ENCODE measurements at regions of chr3 and their contacts with region 1.

Region 1: DNA sequence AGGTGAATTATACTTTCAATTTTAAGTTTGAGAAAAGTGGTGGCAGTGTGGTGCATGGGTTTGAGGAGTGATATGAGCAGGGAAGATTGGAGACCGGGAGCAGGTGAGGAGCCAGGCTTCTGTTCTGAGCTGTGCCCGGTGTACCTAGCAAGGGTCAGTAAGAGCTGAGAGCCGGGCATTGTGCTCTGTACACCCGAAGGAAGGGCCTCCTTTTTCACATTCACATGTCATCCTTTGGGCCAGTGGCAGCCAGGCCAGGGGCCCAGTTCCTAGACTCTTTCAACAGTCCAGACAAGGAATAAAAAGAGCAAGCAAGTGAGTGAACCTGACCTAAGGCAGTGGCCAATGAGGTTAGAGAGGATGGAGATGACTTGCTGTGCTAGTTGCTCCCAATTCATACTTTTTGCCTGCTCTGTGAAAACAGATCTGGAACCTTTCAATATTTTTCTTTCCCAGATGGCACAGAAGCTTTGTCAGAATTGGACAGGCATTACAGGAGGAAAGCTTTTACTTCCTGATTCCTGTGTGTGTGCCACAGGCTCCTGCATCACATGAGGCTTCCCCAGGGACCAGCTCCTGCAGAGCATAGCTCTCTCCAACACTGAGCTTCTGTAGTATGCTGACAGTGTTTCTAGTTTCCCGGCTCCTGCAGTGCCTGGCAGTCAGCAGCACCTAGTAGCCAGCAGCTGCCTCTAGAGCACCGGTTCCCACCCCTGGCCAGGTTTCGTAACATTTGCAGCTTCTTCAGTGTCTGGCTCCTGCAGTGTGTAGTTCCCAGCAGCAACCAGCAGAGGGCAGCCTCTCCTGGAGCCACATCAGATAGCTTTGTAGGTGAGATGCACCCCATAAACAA is 5.3 kb upstream of the TRA2B start:
- DNase-seq: peak; percentile 61 to 87 (median 75)
- ATAC-seq: peak; percentile 28 to 92 (median 84)
- H3K4me3 ChIP-seq: peak overlapping the region in 7 of 12 donors; percentile 17 to 31 (median 26)
- H3K27ac ChIP-seq: no peak overlapping the region
- H3K4me1 ChIP-seq: peaks cover 0 to 11% (median 4%) of the 10 kb centered on the region in 12 donors
- H3K27me3 ChIP-seq: no peaks in the 10 kb centered on the region
- CTCF ChIP-seq: peak; percentile 96 to 100 (median 98)
- POLR2A ChIP-seq: no peak

Region 2: DNA sequence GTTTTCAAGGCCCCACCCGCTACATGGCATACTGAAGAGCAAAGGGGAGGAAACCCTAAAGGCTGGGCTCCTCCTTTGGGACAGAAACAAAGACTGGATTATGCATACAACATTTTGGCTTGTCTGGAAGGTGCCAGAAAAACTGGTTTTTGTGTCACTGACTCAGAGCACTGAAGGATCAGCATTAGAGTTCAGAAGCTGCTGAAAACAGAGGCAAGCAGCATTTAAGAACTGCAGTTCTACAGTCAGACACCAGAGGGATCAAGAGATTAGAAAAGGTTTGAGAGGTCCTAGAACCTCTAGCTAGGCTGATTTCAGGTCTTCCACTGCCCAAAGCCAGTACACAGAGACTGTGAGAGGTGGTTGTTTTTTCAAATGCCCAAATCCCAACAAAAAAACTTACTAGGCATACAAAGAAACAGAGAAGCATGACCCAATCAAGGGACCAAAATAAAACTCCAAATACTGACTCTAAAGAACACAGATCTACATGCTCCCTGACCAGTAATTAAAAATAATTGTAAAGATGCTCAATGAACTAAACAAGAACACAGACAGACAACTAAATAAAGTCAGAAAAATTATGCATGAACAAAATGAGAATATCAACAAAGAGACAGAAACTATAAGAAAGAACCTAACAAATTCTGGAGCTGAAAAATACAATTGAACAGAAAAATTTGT is 265.8 kb before region 1 on chr3:
- intact Hi-C with region 1: loop called in 1 of 10 experiments (anchors 10 kb)
- DNase-seq: no peak
- ATAC-seq: peak in 2 of 4 donors; percentile 46 to 53
- H3K4me3 ChIP-seq: no peak overlapping the region
- H3K27ac ChIP-seq: no peak overlapping the region
- H3K4me1 ChIP-seq: no peaks in the 10 kb centered on the region
- H3K27me3 ChIP-seq: no peaks in the 10 kb centered on the region
- CTCF ChIP-seq: peak; percentile 39 to 56 (median 47)
- POLR2A ChIP-seq: no peak

Region 3: DNA sequence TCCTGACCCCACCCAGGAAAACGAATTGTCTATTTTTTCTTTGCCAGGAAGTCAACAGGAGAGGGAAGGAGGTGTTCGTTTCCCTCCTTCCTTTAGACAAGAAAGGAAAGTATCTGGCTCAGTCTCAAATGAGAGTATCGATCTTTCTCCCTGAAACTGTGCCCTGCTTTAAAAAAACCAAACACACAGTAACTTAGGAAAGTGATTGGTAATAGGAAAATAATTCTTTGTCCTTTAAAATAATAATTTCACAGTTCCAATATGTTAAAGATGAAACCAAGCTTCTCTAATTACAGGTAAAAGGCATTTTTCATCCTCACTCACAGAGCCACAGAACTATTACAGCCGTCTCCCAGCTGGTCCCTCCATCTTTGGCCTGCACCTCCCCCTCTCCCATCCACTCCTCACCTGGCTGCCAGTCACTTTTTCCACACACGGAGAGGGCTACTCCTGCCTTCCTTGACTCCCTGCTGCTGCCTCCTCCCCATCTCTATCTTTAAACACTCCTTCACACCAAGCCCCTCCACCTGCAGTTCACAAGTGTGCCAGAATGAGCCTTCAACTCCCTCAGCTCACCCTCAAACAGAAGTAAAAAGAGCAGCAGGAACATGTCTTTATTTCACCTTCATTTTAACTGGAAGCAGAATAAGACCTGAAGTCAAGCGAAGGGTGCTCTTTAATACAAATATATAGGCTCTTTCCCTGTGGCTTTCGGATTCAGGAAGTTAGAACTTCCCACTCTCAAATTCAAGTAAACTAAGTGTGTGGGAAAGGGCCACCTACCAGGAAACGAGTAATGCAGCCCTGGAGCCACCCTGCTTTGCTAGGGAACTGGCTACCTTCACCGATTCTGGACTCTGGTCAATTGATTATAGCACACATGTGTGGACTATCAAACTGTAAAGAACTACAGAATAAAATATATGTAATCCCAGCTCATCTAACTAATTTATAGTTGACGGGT is 240.6 kb before region 1 on chr3:
- intact Hi-C with region 1: no loop called
- DNase-seq: no peak
- ATAC-seq: no peak
- H3K4me3 ChIP-seq: no peak overlapping the region
- H3K27ac ChIP-seq: no peak overlapping the region
- H3K4me1 ChIP-seq: peaks cover 0 to 20% (median 2%) of the 10 kb centered on the region in 12 donors
- H3K27me3 ChIP-seq: no peaks in the 10 kb centered on the region
- CTCF ChIP-seq: no peak
- POLR2A ChIP-seq: no peak

Region 4: GRCh38 chr3:185733980-185734724 is 209.0 kb before region 1 on chr3:
- intact Hi-C with region 1: loop called in 2 of 10 experiments (anchors 10 kb)
- DNase-seq: peak in 3 of 5 donors; percentile 15 to 39 (median 32)
- ATAC-seq: peak in 3 of 4 donors; percentile 66 to 76 (median 72)
- H3K4me3 ChIP-seq: no peak overlapping the region
- H3K27ac ChIP-seq: no peak overlapping the region
- H3K4me1 ChIP-seq: peaks cover 0 to 7% (median 0%) of the 10 kb centered on the region in 12 donors
- H3K27me3 ChIP-seq: no peaks in the 10 kb centered on the region
- CTCF ChIP-seq: peak in 11 of 12 donors; percentile 27 to 55 (median 48)
- POLR2A ChIP-seq: no peak

Measured in heart left ventricle (tissue), 16 donors.